PC-3 (cell line): ENCODE measurements at regions of chr3 and their contacts with region 1.

Region 1: DNA sequence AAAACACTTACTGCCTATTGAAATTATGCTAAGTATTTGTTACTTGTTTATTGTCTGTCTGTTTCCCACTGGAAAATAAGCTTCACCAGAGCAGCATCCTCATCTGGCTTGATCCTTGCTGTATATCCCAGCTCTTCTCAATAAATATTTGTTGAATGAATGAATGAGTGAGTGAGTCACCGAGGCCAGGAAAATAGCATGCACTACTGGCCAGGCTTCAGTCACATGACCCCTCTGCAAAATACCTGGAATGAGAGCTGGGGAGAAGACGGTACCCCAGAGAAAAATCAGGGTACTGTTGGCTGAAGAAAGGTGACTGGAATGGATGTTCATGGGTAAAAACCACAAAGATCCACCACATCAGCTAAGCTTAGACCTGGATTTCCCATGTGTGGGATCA is 331.9 kb downstream of the SHQ1 start:
- DNase-seq: peak; percentile 28
- ATAC-seq: no peak
- H3K4me3 ChIP-seq: no peak overlapping the region
- H3K27ac ChIP-seq: no peak overlapping the region
- H3K4me1 ChIP-seq: peaks cover 28% of the 10 kb centered on the region
- H3K27me3 ChIP-seq: no peaks in the 10 kb centered on the region
- CTCF ChIP-seq: no peak

Region 2: GRCh38 chr3:72473156-72473555 is 43.2 kb before region 1 on chr3:
- CTCF ChIA-PET with region 1: interaction called, 13 read pairs
- POLR2A ChIA-PET with region 1: no interaction called
- intact Hi-C with region 1: no loop called
- DNase-seq: no peak
- ATAC-seq: no peak
- H3K4me3 ChIP-seq: no peak overlapping the region
- H3K27ac ChIP-seq: no peak overlapping the region
- H3K4me1 ChIP-seq: no peaks in the 10 kb centered on the region
- H3K27me3 ChIP-seq: no peaks in the 10 kb centered on the region
- CTCF ChIP-seq: no peak

Region 3: GRCh38 chr3:72903004-72903403 is 386.6 kb after region 1 on chr3:
- CTCF ChIA-PET with region 1: no interaction called
- POLR2A ChIA-PET with region 1: no interaction called
- intact Hi-C with region 1: no loop called
- DNase-seq: peak; percentile 72
- ATAC-seq: peak; percentile 74
- H3K4me3 ChIP-seq: no peak overlapping the region
- H3K27ac ChIP-seq: no peak overlapping the region
- H3K4me1 ChIP-seq: peaks cover 13% of the 10 kb centered on the region; the same call in 1 of the 2 replicates
- H3K27me3 ChIP-seq: no peaks in the 10 kb centered on the region
- CTCF ChIP-seq: no peak